ENCODE measurements at regions of chr15 and their contacts with region 1.

Region 1: DNA sequence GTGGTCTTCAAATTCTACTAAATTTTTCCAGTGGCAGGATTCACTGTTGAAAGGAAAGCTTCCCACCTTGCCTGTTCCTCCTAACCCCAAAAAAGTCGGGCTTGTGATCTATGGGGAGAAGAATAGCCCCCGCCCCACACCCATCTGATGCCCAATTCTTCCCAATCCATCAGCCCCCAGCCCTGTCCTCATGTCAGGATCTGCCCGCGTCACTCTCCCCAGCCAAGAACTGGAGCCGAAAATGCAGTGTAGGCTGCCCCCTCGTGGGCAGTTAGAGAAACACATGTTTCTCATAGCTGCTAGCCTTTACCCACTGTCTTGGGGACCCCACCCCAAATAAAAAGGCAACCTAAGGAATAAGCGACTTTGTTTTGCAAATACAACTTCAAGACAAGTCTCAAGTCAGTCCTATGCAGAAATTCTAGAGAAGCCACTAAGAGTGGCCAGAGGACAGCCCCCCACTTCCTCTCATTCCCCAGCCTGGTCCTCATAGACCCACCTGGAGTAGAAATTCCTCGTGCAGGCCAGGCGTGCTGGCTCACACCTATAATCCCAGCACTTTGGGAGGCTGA is 13.0 kb upstream of the CSK start:
- DNase-seq: peak; percentile 58
- H3K4me3 ChIP-seq: no peak overlapping the region
- H3K27ac ChIP-seq: no peak overlapping the region
- H3K4me1 ChIP-seq: peaks cover 2% of the 10 kb centered on the region
- H3K27me3 ChIP-seq: peaks cover 0 to 2% of the 10 kb centered on the region in 2 experiments
- CTCF ChIP-seq: peak; percentile 71 to 72
- POLR2A ChIP-seq: no peak

Region 2: GRCh38 chr15:74265046-74265639 is 503.7 kb before region 1 on chr15:
- CTCF ChIA-PET with region 1: no interaction called
- POLR2A ChIA-PET with region 1: no interaction called
- dilution Hi-C with region 1: no loop called
- intact Hi-C with region 1: no loop called
- DNase-seq: peak; percentile 2
- H3K4me3 ChIP-seq: no peak overlapping the region
- H3K27ac ChIP-seq: no peak overlapping the region
- H3K4me1 ChIP-seq: no peaks in the 10 kb centered on the region
- H3K27me3 ChIP-seq: no peaks in the 10 kb centered on the region
- CTCF ChIP-seq: no peak
- POLR2A ChIP-seq: no peak

Region 3: DNA sequence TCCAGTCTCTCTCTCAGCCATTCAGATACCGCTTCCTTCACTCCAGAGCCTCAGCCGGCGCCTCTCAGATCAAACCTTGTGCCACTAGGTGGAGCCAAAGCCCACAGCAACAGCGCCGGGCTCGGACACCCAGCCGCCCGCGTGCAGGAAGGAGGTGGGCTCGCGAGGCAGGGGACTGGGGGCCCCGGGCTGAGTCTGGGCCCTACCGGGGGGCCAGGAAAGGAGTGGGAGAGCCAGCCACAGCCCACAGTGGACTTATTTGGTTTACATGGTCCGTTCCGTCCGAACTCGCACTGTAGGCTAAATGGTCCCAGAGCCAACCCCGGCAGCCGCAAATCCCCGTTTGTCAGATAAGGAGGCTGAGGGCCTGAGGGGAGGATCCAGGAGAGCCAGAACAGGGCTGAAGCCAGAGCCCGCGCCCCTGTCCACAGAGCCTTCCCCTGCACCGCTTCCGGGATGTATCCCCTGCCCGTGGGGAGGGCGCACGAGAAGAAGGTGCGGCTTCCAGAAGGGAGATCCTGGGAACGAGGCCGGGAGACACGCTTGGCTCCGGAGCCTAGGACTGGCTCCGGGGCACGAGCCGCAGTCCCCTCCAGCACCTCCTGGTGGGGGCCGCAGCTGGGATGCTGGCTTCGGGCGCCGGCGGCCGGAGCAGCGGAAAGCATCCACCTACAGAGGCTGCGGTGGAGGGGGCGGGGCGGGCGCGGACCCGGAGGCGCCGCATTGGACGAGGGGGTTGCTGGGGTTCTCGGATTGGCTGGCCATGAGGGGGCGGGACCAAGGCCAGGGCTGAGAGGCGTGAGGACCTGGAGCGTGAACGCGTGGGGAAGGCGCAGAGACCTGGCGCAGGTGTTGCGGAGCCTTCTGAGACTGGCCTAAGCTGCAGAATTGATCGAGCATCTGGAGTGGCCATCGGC is 394.9 kb before region 1 on chr15:
- CTCF ChIA-PET with region 1: interaction called, 7 read pairs
- POLR2A ChIA-PET with region 1: no interaction called
- dilution Hi-C with region 1: no loop called
- intact Hi-C with region 1: loop called (anchors 1 kb)
- DNase-seq: peak; percentile 84
- H3K4me3 ChIP-seq: peak overlapping the region; percentile 37 to 41 (median 40)
- H3K27ac ChIP-seq: no peak overlapping the region
- H3K4me1 ChIP-seq: peaks cover 11% of the 10 kb centered on the region
- H3K27me3 ChIP-seq: peaks cover 14 to 25% of the 10 kb centered on the region in 2 experiments
- CTCF ChIP-seq: peak; percentile 79 to 84
- POLR2A ChIP-seq: no peak

Region 4: DNA sequence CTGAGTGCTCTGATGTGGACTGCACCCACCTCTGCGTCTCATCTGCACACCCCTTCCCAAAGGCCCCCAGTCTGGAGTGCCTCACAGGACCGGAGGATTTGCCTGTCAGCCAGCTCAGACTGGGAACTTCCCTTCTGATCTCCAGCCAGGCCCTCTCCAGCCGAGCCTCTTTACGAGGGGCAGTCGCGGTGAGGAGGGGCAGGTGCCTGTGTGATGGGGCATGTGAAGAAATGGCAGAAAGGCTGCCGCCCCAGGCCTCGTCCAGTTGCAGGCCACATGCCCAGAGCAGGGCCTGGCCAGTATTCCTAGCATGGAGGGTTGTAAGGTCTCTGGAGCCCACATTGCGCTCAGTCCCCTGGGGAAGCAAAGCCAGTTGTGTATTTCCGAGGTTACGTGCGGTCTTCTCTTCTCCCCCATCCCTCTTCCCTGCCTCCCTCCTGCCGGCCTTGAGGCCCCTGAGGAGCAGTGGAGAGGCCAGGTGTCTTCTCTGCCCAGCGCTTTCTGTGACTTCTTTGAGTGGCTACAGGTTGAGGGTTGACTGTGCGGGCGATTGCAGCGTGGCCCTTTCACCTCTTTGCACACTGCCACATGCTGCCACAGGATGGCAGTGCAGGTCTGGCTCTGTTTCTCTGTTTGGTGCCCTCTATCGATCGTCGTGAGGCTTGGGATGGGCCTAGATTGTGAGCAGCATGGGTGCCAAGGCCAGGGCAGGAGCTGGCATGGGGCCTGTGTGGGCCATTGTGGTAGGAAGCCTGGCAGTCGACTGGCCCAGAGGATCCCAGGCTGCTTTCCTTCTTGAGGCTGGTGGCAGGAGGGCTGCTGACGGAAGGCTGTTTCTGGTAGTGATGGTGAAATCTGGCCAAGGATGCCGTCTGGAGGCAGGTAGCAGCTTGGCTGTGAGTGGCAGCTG is 148.0 kb before region 1 on chr15:
- CTCF ChIA-PET with region 1: interaction called, 24 read pairs
- POLR2A ChIA-PET with region 1: no interaction called
- dilution Hi-C with region 1: loop called (anchors 25 kb)
- intact Hi-C with region 1: no loop called
- DNase-seq: peak; percentile 72
- H3K4me3 ChIP-seq: no peak overlapping the region
- H3K27ac ChIP-seq: no peak overlapping the region
- H3K4me1 ChIP-seq: peaks cover 9% of the 10 kb centered on the region
- H3K27me3 ChIP-seq: no peaks in the 10 kb centered on the region
- CTCF ChIP-seq: peak; percentile 99
- POLR2A ChIP-seq: peak; percentile 21

Region 5: DNA sequence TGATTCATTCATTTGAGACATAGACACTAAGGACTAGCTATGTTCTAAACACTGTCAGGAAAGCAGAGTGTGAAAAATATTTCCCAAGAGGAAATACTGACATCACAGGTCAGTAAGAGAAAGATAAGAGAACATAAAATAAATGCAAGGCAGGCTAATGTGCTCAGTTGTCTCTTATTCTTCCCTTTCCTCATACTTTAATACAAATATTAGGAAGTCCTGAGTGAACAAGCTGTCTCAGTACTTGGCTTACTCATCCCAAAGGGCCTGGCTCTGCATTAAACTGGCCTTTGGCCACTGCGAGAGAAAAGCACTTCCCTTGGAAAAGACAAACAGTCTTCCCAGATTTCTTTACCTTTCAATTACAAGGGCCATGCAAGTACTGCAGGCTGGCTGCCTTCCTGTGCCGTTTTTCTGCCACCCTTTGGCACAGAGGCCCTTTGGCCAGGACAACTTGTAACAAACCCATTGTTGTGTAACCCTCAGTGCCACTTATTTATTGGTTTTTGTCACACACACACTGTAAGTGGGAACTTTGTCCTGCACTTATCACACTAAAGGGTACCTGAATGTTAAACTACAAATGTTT is 104.7 kb before region 1 on chr15:
- CTCF ChIA-PET with region 1: interaction called, 14 read pairs
- POLR2A ChIA-PET with region 1: no interaction called
- dilution Hi-C with region 1: no loop called
- intact Hi-C with region 1: no loop called
- DNase-seq: peak; percentile 88
- H3K4me3 ChIP-seq: peak overlapping the region in 1 of 3 experiments; percentile 7
- H3K27ac ChIP-seq: peak overlapping the region; percentile 85
- H3K4me1 ChIP-seq: peaks cover 35% of the 10 kb centered on the region
- H3K27me3 ChIP-seq: no peaks in the 10 kb centered on the region
- CTCF ChIP-seq: no peak
- POLR2A ChIP-seq: peak; percentile 34

Region 6: DNA sequence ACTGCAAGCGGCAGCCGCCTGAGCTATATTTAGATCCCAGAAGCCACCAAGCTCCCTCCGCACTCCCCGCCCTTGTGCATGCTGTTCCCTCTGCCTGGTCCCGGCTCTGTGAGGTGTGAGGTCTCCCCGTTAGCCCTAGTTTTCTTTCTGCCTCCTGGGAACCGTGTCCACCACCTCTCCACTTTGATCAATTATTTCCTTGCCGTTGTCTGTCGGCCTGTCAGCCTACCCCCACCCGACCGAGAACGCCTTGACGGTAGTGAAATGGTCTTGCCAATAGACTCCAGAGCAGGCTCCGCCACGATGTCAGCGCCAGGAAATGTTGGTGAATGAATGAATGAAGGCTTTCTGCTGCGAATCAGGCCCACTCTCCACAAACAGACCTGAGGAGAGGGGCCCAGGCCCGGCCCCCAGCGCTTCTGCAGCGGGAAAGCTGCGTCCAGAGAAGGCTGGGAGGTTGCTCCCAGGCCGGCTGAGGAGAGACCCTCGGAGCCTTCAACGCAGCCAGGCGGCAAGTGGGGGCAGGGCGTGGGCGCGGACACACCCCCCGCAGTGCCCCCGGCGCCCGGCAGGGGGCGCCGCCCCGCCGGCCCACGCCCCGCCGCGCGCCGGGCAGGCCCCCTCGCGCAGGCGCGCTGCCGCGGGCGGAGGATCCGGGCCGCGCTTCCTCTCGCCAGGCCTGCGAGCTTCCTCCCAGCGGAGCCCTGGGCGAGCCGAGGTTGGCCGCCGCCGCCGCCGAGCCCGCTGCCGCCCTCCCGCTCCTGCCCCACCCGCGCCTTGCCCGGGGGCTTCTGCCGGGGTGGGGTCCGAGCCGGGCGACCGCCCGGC is 12.8 kb after region 1 on chr15 and contains the start of gene CSK:
- CTCF ChIA-PET with region 1: interaction called, 98 read pairs
- POLR2A ChIA-PET with region 1: no interaction called
- dilution Hi-C with region 1: no loop called
- intact Hi-C with region 1: no loop called
- DNase-seq: peak; percentile 53
- H3K4me3 ChIP-seq: peak within 1 kb of the TSS; percentile 88 to 94 (median 90)
- H3K27ac ChIP-seq: peak within 1 kb of the TSS; percentile 62
- H3K4me1 ChIP-seq: peaks cover 37% of the 10 kb centered on the region
- H3K27me3 ChIP-seq: no peaks in the 10 kb centered on the region
- CTCF ChIP-seq: peak; percentile 52 to 65
- POLR2A ChIP-seq: peak; percentile 67
- total RNA-seq, gene CSK: 89.1 and 104 TPM in 2 replicates

Region 7: GRCh38 chr15:74809956-74810355 is 41.1 kb after region 1 on chr15:
- CTCF ChIA-PET with region 1: interaction called, 14 read pairs
- POLR2A ChIA-PET with region 1: no interaction called
- dilution Hi-C with region 1: no loop called
- intact Hi-C with region 1: no loop called
- DNase-seq: no peak
- H3K4me3 ChIP-seq: no peak overlapping the region
- H3K27ac ChIP-seq: no peak overlapping the region
- H3K4me1 ChIP-seq: no peaks in the 10 kb centered on the region
- H3K27me3 ChIP-seq: no peaks in the 10 kb centered on the region
- CTCF ChIP-seq: no peak
- POLR2A ChIP-seq: no peak

Region 8: DNA sequence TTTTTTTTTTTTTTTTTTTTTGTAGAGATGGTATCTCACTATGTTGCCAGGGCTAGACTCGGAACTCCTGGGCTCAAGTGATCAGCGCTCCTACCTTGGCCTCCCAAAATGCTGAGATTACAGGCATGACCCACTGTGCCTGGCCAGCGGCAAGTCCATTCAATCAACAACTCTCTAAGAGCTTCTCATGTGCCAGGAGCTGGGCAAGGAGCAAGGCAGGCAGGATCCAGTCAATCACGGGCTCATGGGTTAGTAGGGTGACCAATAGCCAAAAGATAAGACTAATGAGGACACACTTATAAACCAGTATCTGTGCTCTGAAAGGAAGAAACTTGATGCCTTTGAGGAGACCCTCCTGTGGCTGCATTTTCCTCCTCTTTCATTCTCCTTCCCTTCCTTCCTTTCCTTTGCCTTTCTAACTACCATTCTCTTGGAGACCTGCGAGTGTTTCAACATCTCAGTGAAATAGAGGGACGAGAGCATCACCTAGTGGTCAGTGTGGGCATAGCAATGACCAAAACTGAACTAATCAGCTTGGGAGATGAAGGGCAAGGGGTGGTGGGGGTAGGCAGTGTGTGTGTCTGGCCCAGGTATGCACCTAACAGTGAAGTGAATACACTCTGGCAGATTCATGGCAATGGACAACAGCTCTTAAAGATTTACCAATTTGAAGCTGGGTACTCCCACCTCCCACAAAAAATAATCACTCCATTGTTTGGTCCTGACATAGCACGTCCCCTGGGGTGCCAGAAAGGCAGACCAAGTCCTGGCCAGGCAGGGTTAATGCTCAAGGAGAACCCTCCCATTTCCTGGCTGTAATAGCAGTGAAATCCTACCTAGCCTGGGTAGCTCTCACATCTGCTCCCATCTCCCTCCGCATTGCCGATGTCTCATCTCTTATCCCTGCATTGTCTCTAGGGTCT is 181.5 kb after region 1 on chr15:
- CTCF ChIA-PET with region 1: interaction called, 210 read pairs
- POLR2A ChIA-PET with region 1: interaction called, 4 read pairs
- dilution Hi-C with region 1: no loop called
- intact Hi-C with region 1: loop called (anchors 1 kb)
- DNase-seq: peak; percentile 82
- H3K4me3 ChIP-seq: no peak overlapping the region
- H3K27ac ChIP-seq: no peak overlapping the region
- H3K4me1 ChIP-seq: peaks cover 12% of the 10 kb centered on the region
- H3K27me3 ChIP-seq: no peaks in the 10 kb centered on the region
- CTCF ChIP-seq: peak; percentile 91 to 97
- POLR2A ChIP-seq: no peak

Region 9: DNA sequence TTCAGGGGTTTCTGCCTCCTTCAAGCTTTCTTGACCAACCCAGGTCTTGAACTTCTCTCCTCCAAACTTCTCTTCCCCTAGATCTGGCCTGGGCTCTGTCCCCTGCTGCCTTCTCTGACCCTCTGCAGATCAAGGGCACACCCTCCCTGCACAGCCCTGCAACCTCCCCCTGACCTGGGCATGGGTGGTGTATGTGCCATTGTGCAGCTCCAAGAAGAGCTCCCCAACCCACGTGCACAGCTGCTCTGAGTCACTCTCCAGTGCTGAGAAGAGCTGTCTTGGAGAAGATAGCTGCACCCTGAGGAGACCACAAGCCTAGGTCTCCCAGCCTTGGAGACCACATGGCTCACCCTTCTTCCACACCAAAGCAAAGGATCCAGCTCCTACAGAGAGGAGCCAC is 591.5 kb after region 1 on chr15:
- CTCF ChIA-PET with region 1: no interaction called
- POLR2A ChIA-PET with region 1: no interaction called
- dilution Hi-C with region 1: no loop called
- intact Hi-C with region 1: no loop called
- DNase-seq: no peak
- H3K4me3 ChIP-seq: no peak overlapping the region
- H3K27ac ChIP-seq: no peak overlapping the region
- H3K4me1 ChIP-seq: no peaks in the 10 kb centered on the region
- H3K27me3 ChIP-seq: no peaks in the 10 kb centered on the region
- CTCF ChIP-seq: no peak
- POLR2A ChIP-seq: no peak

Measured in endothelial cell of umbilical vein (primary cell).